ENCODE measurements at regions of chr5 and their contacts with region 1.

Region 1: GRCh38 chr5:56328753-56329560 is 95.8 kb upstream of the ANKRD55 start:
- DNase-seq: no peak

Region 2: DNA sequence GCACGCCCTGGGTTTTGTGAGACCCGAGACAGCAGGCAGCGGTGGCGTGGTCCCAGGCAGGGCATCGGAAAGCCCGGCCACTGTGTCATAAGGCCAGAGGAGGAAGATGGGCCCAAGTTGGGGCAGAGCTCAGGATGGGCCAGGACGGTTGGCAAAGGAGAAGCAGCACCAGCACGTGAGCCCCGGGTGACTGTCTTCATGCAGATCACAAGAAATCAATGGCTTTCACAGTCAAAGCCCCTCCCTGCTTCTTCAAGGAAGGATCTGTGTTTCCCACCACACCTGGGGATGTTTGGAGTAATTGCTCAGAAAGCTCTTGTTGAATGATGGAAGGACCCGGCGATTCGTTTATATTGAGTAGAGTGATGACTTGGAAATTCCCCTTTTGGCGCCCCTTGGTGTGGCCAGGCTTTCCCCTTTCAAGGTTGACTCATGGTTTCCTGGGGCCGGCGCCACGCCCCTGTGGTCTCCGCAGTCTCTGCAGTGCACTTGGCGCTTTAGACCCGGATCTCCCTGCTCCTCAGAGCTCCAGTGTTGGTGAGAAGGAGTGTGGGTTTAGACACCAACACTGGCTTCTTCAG is 425.7 kb before region 1 on chr5:
- intact Hi-C with region 1: no loop called
- DNase-seq: no peak

Region 3: GRCh38 chr5:56286015-56286884 is 42.7 kb before region 1 on chr5:
- intact Hi-C with region 1: loop called (anchors 5 kb)
- DNase-seq: no peak

Region 4: GRCh38 chr5:56375011-56375410 is 46.1 kb after region 1 on chr5:
- intact Hi-C with region 1: loop called (anchors 5 kb)
- DNase-seq: no peak

Region 5: DNA sequence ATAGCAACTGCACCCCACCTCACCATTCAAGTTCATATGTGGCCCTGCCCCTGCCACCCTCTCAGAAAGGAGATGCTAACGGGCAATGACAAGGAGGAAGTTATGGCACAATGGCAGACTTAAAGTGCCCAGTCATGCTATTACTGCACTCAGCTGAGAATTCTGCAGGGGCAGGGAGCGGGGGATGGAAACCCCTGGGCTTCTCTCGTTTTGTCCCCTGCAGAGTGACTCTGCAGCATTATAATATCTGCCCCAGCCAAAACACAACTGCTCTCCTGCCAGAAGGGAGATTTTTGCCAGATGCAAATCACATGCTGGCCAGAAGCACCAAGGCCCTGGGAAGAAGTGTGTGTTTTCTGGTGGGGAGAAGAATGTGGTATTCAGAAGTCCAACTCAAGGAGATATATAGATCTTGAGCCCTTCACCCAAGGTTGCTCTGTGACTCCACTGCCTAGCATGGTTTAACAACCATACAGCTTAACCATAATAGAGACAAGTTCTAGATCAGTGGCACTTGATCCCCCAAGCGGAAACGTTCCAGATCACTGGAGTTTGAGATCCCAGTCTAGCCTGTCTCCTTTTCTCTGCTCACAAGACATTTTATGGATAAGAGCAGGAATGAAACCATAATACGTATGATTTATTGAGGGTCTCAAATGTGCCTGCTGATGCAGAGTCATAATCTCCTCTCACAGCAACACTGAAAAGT is 279.4 kb after region 1 on chr5:
- intact Hi-C with region 1: no loop called
- DNase-seq: peak; percentile 82

Measured in cardiac septum (tissue), 1 donor.